Transverse colon (tissue), 4 donors: ENCODE measurements at regions of chr5 and their contacts with region 1.

Region 1: DNA sequence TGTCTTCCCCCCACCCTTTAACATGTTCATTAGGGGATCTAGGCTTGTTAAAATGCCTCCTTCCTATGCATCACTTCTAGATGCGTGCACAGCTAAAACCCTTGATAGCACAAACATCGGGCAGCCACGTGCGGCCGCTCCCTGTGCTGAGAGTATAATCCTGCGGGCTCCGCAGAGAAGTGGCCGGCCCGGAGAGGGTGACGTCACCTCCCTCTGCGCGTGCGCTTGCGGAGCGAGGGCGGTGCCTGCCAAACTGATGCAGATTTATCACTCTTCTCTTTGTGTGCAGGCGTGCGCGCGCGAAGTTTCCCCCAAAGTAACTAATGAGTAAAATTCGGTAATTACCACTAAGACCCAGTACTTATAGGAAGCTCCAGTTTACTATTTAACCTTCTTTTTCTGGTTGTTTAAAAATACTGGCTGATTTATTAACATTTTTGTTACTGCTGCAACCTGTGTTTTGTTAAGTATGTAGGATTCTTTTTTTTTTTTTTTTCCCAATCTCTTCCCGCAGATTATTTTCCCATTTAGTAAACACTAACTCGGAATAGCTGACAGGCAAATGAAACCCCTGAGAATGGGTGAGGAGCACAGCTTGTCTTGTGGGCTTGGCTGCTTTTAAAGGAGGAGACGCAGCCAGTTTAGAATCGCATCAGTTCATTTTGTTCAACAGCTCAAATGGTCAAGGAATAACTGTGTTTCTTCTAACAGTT is 121.6 kb downstream of the TRIO start:
- DNase-seq: peak; percentile 95
- H3K4me3 ChIP-seq: peak overlapping the region in 2 of 4 donors; percentile 7 to 32
- H3K27ac ChIP-seq: peak overlapping the region; percentile 50 to 72 (median 66)
- H3K4me1 ChIP-seq: peaks cover 15 to 45% (median 35%) of the 10 kb centered on the region in 4 donors
- H3K27me3 ChIP-seq: no peaks in the 10 kb centered on the region
- CTCF ChIP-seq: peak in 1 of 5 experiments; percentile 22
- EP300 ChIP-seq: no peak
- POLR2A ChIP-seq: no peak

Region 2: GRCh38 chr5:14108170-14108996 is 156.4 kb before region 1 on chr5:
- in situ Hi-C with region 1: loop called in 3 of 4 experiments (anchors 5 to 25 kb)
- intact Hi-C with region 1: loop called (anchors 5 kb)
- DNase-seq: peak; percentile 72
- H3K4me3 ChIP-seq: peak overlapping the region in 3 of 4 donors; percentile 13 to 38 (median 19)
- H3K27ac ChIP-seq: peak overlapping the region in 1 of 4 donors; percentile 35
- H3K4me1 ChIP-seq: peaks cover 0 to 12% (median 4%) of the 10 kb centered on the region in 4 donors
- H3K27me3 ChIP-seq: no peaks in the 10 kb centered on the region
- CTCF ChIP-seq: peak; percentile 69 to 85 (median 75)
- EP300 ChIP-seq: no peak
- POLR2A ChIP-seq: no peak

Region 3: DNA sequence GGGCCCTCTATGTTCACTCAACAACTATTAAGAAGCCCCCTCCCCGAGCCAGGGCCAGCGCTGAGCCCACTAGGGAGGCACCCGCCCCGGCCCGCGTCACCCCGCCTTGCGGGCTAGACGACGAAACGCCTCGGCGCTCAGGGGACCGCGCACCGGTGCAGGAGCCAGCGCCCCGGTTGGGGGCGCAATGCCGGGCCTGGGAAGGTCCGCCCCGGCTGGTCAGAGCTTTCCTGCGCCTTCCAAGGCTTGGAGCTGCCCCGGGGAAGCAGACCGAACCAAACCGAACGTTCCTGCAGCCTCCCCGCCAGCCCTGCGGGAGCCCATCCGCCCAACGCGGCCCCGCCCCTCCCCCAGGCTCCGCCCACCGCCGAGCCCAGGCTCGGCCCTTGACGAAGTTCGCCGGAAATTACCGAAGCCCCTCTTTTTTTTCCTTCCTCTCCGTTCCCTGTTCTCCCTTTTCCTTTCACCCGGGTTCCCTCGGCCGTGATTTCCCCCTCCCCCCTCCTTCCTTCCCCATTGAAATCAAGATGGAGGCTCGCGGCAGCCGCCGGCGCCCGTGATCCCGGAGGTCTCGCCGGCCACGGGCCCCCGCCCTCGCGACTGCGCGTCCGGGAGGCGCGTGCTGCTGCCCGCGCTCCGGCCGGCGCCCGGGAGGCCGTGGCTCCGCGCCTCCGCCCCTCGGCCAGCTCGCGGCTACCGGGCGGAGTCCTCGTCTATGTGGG is 121.8 kb before region 1 on chr5 and contains the start of gene TRIO:
- in situ Hi-C with region 1: loop called in 2 of 4 experiments (anchors 10 kb)
- intact Hi-C with region 1: loop called (anchors 5 kb)
- DNase-seq: peak; percentile 93
- H3K4me3 ChIP-seq: peak within 1 kb of the TSS; percentile 71 to 97 (median 78)
- H3K27ac ChIP-seq: peak within 1 kb of the TSS; percentile 95 to 99 (median 98)
- H3K4me1 ChIP-seq: peaks cover 21 to 31% (median 28%) of the 10 kb centered on the region in 4 donors
- H3K27me3 ChIP-seq: no peaks in the 10 kb centered on the region
- CTCF ChIP-seq: peak; percentile 35 to 70 (median 55)
- EP300 ChIP-seq: no peak
- POLR2A ChIP-seq: peak; percentile 43
- total RNA-seq, gene TRIO: 186 to 388 (median 285) TPM